Activated B cell treated with CpG ODN at 0.5 μM for 24 hours (primary cell): ENCODE measurements at regions of chr2 and their contacts with region 1.

Region 1: DNA sequence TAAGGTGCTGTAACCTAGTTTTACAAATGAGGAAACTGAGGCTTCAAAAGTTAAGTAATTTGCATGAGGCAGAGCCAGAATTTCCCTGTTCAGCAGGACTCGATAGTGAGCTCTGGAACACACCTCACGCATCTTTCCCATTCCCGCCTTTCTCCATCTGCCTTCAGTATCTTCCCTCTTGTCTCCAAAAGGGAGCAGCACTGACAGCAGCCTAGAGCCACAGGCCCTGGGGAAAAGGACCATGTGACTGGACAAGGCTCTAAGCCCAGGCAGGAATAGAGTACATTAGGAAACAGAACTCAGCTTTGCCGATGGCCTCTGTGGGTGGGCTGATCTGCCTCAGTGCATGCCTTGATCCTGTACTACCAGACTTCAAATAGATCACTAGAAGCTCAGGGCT is 21.5 kb downstream of the GPR155 start:
- DNase-seq: no peak
- ATAC-seq: no peak
- H3K4me3 Mint-ChIP-seq: no peak overlapping the region
- H3K27ac Mint-ChIP-seq: no peak overlapping the region
- H3K4me1 Mint-ChIP-seq: no peaks in the 10 kb centered on the region
- H3K27me3 Mint-ChIP-seq: no peaks in the 10 kb centered on the region
- CTCF ChIP-seq: no peak

Region 2: DNA sequence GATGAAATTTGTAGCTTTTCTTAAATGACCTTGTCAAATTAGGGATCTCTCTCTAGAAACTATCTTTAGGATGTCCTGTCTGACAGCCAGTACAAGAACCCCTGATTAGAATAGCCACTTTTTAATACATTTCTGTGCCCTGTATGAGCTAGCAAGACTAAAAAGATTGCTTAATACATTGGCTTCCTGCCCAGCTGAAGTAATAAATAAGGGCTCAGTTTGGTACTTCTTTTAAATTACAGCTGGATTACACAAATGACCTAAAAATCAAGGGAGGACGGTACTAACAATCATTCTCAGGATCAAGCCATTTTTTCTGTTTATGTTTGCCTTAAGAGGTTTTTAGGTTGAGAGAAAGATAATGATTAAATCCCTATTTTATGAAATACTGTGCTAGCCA is 205.3 kb before region 1 on chr2:
- CTCF ChIA-PET with region 1: no interaction called
- POLR2A ChIA-PET with region 1: no interaction called
- intact Hi-C with region 1: no loop called
- DNase-seq: no peak
- ATAC-seq: no peak
- H3K4me3 Mint-ChIP-seq: no peak overlapping the region
- H3K27ac Mint-ChIP-seq: no peak overlapping the region
- H3K4me1 Mint-ChIP-seq: no peaks in the 10 kb centered on the region
- H3K27me3 Mint-ChIP-seq: peaks cover 14% of the 10 kb centered on the region
- CTCF ChIP-seq: no peak

Region 3: DNA sequence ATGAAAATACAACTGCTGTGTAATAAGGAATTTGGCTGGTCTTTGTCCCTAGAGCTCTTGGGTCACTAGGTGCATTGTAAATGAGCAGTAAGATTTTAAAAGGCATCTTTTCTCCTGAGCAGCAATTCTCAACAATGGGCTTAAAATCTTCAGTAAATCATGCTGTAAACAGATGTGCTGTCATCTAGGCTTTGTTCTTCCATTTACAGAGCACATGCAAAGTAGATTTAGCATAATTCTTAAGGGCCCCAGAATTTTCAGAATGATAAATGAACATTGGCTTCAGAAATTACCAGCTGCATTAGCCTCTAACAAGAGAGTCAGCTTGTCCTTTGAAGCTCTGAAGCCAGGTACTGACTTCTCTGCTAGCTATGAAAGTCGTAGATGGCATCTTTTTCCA is 96.6 kb before region 1 on chr2:
- CTCF ChIA-PET with region 1: no interaction called
- POLR2A ChIA-PET with region 1: no interaction called
- intact Hi-C with region 1: no loop called
- DNase-seq: no peak
- ATAC-seq: no peak
- H3K4me3 Mint-ChIP-seq: no peak overlapping the region
- H3K27ac Mint-ChIP-seq: no peak overlapping the region
- H3K4me1 Mint-ChIP-seq: no peaks in the 10 kb centered on the region
- H3K27me3 Mint-ChIP-seq: no peaks in the 10 kb centered on the region
- CTCF ChIP-seq: no peak

Region 4: DNA sequence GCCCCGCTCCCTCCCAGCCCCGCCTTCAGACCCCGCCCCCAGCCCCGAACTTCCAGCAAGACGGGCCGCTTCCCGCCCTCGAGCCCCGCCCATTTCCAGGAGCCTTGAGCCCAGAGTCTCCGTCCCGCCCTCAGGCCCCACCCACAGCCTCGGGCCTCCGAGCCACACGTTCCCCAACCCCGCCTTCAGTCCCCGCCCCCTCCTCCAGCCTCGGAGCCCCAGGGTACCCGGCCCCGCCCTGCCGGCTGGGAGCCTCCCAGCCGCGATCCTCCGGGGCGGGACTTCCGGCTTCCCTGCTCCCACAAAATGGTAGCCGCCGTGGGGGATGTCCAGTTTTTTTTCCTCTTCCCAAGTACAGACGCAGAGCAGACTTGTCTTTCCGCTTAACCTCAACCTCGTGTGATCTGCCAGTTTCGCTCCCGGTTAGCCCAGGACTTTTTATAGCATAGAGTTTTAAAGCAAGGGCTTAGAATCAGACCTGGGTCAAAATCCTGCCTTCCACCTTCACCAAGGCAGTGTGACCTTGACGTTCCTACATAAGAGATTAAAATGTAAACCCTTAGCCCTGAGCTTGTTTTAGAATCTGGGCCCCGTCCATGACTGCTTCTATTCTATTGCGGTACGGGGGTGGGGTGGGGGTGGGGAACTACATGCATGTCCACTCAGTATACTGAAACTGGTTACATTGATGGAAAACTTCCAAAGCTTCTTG is 21.9 kb after region 1 on chr2:
- CTCF ChIA-PET with region 1: interaction called, 27 read pairs
- POLR2A ChIA-PET with region 1: interaction called, 7 read pairs
- intact Hi-C with region 1: loop called (anchors 2 kb)
- DNase-seq: peak; percentile 86
- ATAC-seq: peak; percentile 97
- H3K4me3 Mint-ChIP-seq: peak overlapping the region; percentile 96
- H3K27ac Mint-ChIP-seq: peak overlapping the region; percentile 93
- H3K4me1 Mint-ChIP-seq: peaks cover 41% of the 10 kb centered on the region
- H3K27me3 Mint-ChIP-seq: no peaks in the 10 kb centered on the region
- CTCF ChIP-seq: no peak

Region 5: GRCh38 chr2:174546581-174547506 is 81.5 kb after region 1 on chr2:
- CTCF ChIA-PET with region 1: interaction called, 21 read pairs
- POLR2A ChIA-PET with region 1: interaction called, 3 read pairs
- intact Hi-C with region 1: loop called (anchors 1 kb)
- DNase-seq: no peak
- ATAC-seq: peak; percentile 40
- H3K4me3 Mint-ChIP-seq: no peak overlapping the region
- H3K27ac Mint-ChIP-seq: no peak overlapping the region
- H3K4me1 Mint-ChIP-seq: peaks cover 3% of the 10 kb centered on the region
- H3K27me3 Mint-ChIP-seq: no peaks in the 10 kb centered on the region
- CTCF ChIP-seq: no peak

Region 6: GRCh38 chr2:174577967-174578589 is 112.8 kb after region 1 on chr2:
- CTCF ChIA-PET with region 1: interaction called, 29 read pairs
- POLR2A ChIA-PET with region 1: no interaction called
- intact Hi-C with region 1: loop called (anchors 1 kb)
- DNase-seq: no peak
- ATAC-seq: peak; percentile 74
- H3K4me3 Mint-ChIP-seq: no peak overlapping the region
- H3K27ac Mint-ChIP-seq: peak overlapping the region; percentile 30
- H3K4me1 Mint-ChIP-seq: peaks cover 55% of the 10 kb centered on the region
- H3K27me3 Mint-ChIP-seq: no peaks in the 10 kb centered on the region
- CTCF ChIP-seq: peak; percentile 34

Region 7: DNA sequence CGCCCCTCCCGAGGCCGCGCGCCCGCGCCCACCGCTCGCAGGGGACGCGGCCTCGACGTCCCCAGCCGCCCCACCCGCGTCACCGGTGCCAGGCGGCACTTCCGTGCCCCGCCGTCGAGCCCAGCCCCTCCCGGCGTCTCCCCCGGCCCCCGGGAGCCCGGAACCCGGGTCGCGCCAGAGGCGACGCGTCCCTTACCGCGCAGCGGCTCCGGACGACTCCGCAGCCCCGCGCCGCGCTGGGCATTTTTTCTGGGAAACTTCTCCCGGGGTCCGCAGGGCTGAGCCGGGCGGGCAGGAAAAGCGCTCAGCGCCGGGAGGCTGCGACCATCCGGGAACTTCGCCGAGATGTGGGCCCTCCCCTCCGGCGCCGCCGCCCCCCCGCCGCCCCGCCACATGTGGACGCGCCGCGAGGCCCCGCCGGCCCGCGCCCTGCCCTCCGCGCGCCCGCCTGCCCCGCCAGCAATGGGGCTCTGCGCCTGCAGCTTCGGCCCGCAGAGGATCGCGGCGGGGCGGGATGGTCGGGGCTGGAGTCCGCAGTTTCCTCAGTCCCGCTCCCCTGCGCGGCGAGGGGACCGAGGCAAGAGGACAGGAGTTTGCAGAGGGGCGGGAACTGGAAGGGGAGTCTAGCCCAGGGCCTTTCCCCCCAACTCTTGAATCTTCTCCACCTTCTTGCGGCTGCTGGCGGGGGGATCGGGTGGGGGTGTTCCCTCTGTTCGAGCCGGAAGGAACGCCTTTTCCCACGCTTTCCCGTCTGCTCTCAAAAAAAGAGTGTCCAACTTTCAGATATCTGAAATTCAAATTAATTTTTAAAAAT is 217.5 kb after region 1 on chr2:
- CTCF ChIA-PET with region 1: interaction called, 158 read pairs
- POLR2A ChIA-PET with region 1: interaction called, 6 read pairs
- intact Hi-C with region 1: loop called (anchors 1 kb)
- DNase-seq: peak; percentile 63
- ATAC-seq: peak; percentile 74
- H3K4me3 Mint-ChIP-seq: peak overlapping the region; percentile 90
- H3K27ac Mint-ChIP-seq: peak overlapping the region; percentile 83
- H3K4me1 Mint-ChIP-seq: peaks cover 16% of the 10 kb centered on the region
- H3K27me3 Mint-ChIP-seq: no peaks in the 10 kb centered on the region
- CTCF ChIP-seq: no peak

Region 8: DNA sequence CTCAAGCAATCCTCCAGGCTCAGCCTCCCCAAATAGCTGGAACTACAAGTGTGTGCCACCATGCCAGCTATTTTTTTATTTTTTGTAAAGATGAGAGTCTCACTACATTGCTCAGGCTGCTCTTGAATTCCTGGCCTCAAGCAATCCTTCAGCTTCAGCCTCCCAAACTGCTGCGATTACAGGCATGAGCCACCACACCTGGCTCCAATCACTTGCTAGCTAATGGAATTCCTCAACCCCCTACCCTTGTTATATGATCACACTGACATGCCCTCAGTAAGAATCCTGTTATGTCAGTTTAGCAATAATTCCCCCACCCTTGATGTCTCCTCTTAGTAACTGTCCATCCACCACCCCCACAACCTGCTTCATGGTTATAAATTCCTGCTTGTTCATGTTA is 527.6 kb after region 1 on chr2:
- CTCF ChIA-PET with region 1: interaction called, 3 read pairs
- POLR2A ChIA-PET with region 1: no interaction called
- intact Hi-C with region 1: loop called (anchors 5 kb)
- DNase-seq: no peak
- ATAC-seq: no peak
- H3K4me3 Mint-ChIP-seq: no peak overlapping the region
- H3K27ac Mint-ChIP-seq: no peak overlapping the region
- H3K4me1 Mint-ChIP-seq: peaks cover 2% of the 10 kb centered on the region
- H3K27me3 Mint-ChIP-seq: peaks cover 16% of the 10 kb centered on the region
- CTCF ChIP-seq: no peak